MCF 10A (cell line): ENCODE measurements at regions of chr1 and their contacts with region 1.

Region 1: GRCh38 chr1:239898062-239898730 is 193.5 kb upstream of the FMN2 start:
- DNase-seq: peak; percentile 91
- H3K4me3 Mint-ChIP-seq: no peak overlapping the region
- H3K27ac Mint-ChIP-seq: peak overlapping the region; percentile 14
- H3K4me1 Mint-ChIP-seq: peaks cover 15% of the 10 kb centered on the region
- H3K27me3 Mint-ChIP-seq: no peaks in the 10 kb centered on the region
- CTCF ChIP-seq: peak; percentile 97

Region 2: GRCh38 chr1:239386453-239387303 is 511.5 kb before region 1 on chr1 and contains the start of gene CHRM3:
- CTCF ChIA-PET with region 1: interaction called, 11 read pairs
- POLR2A ChIA-PET with region 1: interaction called, 3 read pairs
- intact Hi-C with region 1: no loop called
- DNase-seq: peak; percentile 96
- H3K4me3 Mint-ChIP-seq: peak within 1 kb of the TSS; percentile 89
- H3K27ac Mint-ChIP-seq: peak within 1 kb of the TSS; percentile 1
- H3K4me1 Mint-ChIP-seq: peaks cover 26% of the 10 kb centered on the region
- H3K27me3 Mint-ChIP-seq: peaks cover 55% of the 10 kb centered on the region
- CTCF ChIP-seq: peak; percentile 28
- total RNA-seq, gene CHRM3: 0.56 and 0.71 TPM in 2 replicates

Region 3: DNA sequence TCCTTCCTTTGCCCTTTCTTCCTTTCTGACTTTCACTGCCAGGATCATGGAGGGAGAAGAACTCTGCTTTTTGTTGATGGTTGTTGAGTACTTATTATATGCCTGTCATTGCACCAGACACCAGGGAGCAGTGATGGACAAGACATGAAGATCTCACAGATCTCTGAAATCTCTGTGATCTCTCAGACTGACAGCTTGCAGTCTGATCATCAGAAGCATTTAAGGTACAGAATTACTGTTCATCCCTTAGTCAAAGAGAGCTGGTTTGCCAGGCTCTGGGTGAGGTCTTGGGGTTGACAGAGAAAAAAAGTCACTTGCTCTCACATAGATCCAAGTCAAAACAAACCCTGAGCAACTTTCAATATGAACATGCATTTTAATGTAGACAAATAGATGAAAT is 106.0 kb before region 1 on chr1:
- CTCF ChIA-PET with region 1: interaction called, 16 read pairs
- POLR2A ChIA-PET with region 1: no interaction called
- intact Hi-C with region 1: loop called (anchors 1 kb)
- DNase-seq: peak; percentile 44
- H3K4me3 Mint-ChIP-seq: no peak overlapping the region
- H3K27ac Mint-ChIP-seq: no peak overlapping the region
- H3K4me1 Mint-ChIP-seq: no peaks in the 10 kb centered on the region
- H3K27me3 Mint-ChIP-seq: no peaks in the 10 kb centered on the region
- CTCF ChIP-seq: peak; percentile 6

Region 4: GRCh38 chr1:239879321-239880170 is 18.6 kb before region 1 on chr1:
- CTCF ChIA-PET with region 1: interaction called, 12 read pairs
- POLR2A ChIA-PET with region 1: no interaction called
- intact Hi-C with region 1: no loop called
- DNase-seq: peak; percentile 45
- H3K4me3 Mint-ChIP-seq: no peak overlapping the region
- H3K27ac Mint-ChIP-seq: no peak overlapping the region
- H3K4me1 Mint-ChIP-seq: no peaks in the 10 kb centered on the region
- H3K27me3 Mint-ChIP-seq: no peaks in the 10 kb centered on the region
- CTCF ChIP-seq: no peak

Region 5: DNA sequence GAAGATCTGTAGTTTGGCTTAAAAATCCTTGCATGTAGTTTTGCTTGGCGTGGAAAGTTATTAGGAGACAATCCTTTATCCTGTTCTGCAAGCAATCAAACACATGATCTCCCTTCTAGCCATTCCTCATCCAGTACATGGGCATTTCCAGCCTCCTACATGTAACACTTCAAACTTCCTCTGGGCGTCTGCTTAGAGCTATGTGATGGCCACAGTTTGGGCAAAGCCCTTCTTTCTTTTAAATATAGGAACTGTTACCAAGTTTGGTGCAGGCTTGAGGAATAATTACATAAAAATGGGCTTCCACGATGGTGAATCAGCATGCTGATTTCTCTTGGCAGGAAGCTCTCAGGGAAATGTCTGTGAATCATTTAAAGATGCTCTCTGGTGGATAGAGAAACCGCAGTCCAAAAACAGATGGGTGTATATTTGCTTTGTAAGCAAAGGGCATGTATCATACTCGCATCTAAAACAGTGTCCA is 16.6 kb after region 1 on chr1:
- CTCF ChIA-PET with region 1: interaction called, 16 read pairs
- POLR2A ChIA-PET with region 1: interaction called, 8 read pairs
- intact Hi-C with region 1: no loop called
- DNase-seq: peak; percentile 94
- H3K4me3 Mint-ChIP-seq: no peak overlapping the region
- H3K27ac Mint-ChIP-seq: peak overlapping the region; percentile 59
- H3K4me1 Mint-ChIP-seq: peaks cover 40% of the 10 kb centered on the region
- H3K27me3 Mint-ChIP-seq: no peaks in the 10 kb centered on the region
- CTCF ChIP-seq: peak; percentile 18

Region 6: GRCh38 chr1:240169188-240169587 is 271.0 kb after region 1 on chr1:
- CTCF ChIA-PET with region 1: no interaction called
- POLR2A ChIA-PET with region 1: no interaction called
- intact Hi-C with region 1: no loop called
- DNase-seq: peak; percentile 59
- H3K4me3 Mint-ChIP-seq: no peak overlapping the region
- H3K27ac Mint-ChIP-seq: no peak overlapping the region
- H3K4me1 Mint-ChIP-seq: no peaks in the 10 kb centered on the region
- H3K27me3 Mint-ChIP-seq: no peaks in the 10 kb centered on the region
- CTCF ChIP-seq: peak; percentile 61

Region 7: DNA sequence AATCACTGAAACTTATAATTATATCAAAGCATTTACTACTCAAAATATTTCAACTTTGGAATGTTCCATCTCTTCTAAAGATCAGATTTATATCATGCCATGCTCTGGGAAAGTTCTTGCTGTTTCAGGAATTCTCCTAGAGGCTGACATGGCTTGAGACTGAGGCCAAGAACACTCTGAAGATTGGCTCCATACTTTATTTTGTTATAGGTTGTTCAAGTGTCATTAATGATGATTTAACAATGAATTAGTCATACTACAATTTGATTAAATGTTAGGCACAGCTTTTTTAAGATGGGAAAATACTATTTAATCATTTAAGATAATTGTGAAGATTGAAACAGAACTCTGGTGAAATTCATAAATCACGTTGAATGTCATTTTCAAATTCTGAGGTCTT is 458.4 kb after region 1 on chr1:
- CTCF ChIA-PET with region 1: no interaction called
- POLR2A ChIA-PET with region 1: no interaction called
- intact Hi-C with region 1: no loop called
- DNase-seq: no peak
- H3K4me3 Mint-ChIP-seq: no peak overlapping the region
- H3K27ac Mint-ChIP-seq: no peak overlapping the region
- H3K4me1 Mint-ChIP-seq: no peaks in the 10 kb centered on the region
- H3K27me3 Mint-ChIP-seq: no peaks in the 10 kb centered on the region
- CTCF ChIP-seq: no peak

Region 8: GRCh38 chr1:240595476-240595875 is 697.3 kb after region 1 on chr1:
- CTCF ChIA-PET with region 1: no interaction called
- POLR2A ChIA-PET with region 1: no interaction called
- intact Hi-C with region 1: no loop called
- DNase-seq: no peak
- H3K4me3 Mint-ChIP-seq: no peak overlapping the region
- H3K27ac Mint-ChIP-seq: no peak overlapping the region
- H3K4me1 Mint-ChIP-seq: no peaks in the 10 kb centered on the region
- H3K27me3 Mint-ChIP-seq: no peaks in the 10 kb centered on the region
- CTCF ChIP-seq: no peak